ENCODE measurements at regions of chr17 and their contacts with region 1.

Region 1: DNA sequence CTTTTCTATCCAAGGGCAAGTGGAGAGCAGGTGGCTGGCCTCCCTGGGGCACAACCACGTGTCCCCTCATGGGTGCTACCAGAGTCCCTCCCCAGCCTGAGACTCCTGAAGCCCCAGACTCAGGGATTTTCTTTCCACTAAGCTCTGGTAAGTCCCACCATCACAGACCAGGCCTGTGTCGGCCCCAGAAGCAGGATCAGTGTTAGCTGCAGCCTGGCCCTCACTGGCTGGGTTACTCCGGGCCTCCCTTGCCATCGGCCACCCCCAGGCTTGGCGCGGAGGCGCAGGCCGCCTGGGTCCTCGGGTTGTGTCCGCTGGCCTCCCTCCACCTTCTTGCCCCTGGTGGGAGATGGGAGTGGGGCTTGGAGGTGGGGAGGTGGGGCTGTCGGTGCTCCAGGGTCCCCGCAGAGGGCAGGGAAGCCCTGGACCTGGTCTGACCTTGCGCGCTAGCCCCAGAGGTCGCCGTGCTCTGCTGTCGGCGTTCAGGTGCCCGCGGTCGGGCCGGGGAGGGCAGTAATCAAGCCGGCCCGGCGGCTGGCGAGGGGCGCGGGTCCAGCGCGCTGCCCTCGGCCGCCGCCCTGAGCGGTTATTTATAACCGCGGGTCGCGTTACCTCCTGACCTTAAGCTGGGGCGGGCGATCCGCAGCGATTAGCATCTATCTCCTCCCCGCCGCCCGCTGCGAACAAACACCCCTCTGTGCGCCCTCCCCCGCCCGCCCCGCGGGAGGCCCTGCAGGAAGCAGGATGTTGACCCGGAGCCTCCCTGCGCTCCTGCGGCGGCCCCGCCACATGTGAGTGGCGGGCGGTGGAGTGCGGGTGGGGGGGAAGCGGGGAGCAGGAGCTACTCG is 78.1 kb upstream of the TOB1 start:
- DNase-seq: peak; percentile 97
- ATAC-seq: peak; percentile 85
- H3K4me3 ChIP-seq: peak overlapping the region; percentile 61 to 86 (median 73)
- H3K27ac ChIP-seq: peak overlapping the region; percentile 96
- H3K4me1 ChIP-seq: peaks cover 97% of the 10 kb centered on the region
- H3K27me3 ChIP-seq: no peaks in the 10 kb centered on the region
- CTCF ChIP-seq: peak; percentile 27
- EP300 ChIP-seq: peak; percentile 71 to 96; a peak in 2 of 4 replicates
- POLR2A ChIP-seq: peak; percentile 98 to 99
- RAD21 ChIP-seq: peak; percentile 80

Region 2: GRCh38 chr17:50883850-50884438 is 60.3 kb before region 1 on chr17:
- CTCF ChIA-PET with region 1: no interaction called
- POLR2A ChIA-PET with region 1: interaction called, 43 read pairs
- in situ Hi-C with region 1: no loop called
- intact Hi-C with region 1: no loop called
- DNase-seq: no peak
- ATAC-seq: peak; percentile 47
- H3K4me3 ChIP-seq: peak overlapping the region; percentile 2 to 54 (median 41); a peak in 4 of 6 replicates
- H3K27ac ChIP-seq: peak overlapping the region; percentile 67
- H3K4me1 ChIP-seq: peaks cover 62% of the 10 kb centered on the region
- H3K27me3 ChIP-seq: no peaks in the 10 kb centered on the region
- CTCF ChIP-seq: no peak
- EP300 ChIP-seq: no peak; a peak in 1 of 4 replicates
- POLR2A ChIP-seq: no peak
- RAD21 ChIP-seq: no peak

Region 3: DNA sequence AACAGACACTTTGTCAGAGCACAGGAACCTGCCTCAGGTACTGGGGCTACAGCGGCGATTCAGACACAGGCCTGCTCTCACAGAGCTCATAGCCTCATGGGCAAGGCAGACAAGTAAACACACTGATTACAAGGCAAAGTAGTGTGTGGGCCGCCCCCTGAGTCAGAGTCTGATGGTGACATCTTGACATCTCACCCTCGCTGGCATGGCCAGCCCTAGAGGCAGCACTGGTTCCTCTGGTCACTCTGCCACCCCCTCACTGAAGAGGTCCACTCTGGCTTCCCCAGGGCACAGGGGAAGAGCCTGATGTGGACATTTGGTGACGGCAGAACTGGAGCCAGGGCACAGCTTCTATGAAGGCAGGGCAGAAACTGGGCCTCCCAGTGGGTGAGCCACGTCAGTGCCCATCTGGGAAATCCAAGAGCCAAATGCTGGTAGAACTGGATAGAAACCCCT is 45.2 kb before region 1 on chr17:
- CTCF ChIA-PET with region 1: no interaction called
- POLR2A ChIA-PET with region 1: interaction called, 125 read pairs
- in situ Hi-C with region 1: loop called (anchors 5 kb)
- intact Hi-C with region 1: loop called (anchors 2 kb)
- DNase-seq: peak; percentile 88
- ATAC-seq: peak; percentile 93
- H3K4me3 ChIP-seq: peak overlapping the region in 1 of 3 experiments; percentile 35; a peak in 3 of 6 replicates
- H3K27ac ChIP-seq: peak overlapping the region; percentile 44
- H3K4me1 ChIP-seq: peaks cover 77% of the 10 kb centered on the region
- H3K27me3 ChIP-seq: no peaks in the 10 kb centered on the region
- CTCF ChIP-seq: peak; percentile 33; the same call in 1 of the 2 replicates
- EP300 ChIP-seq: 0 out of 4 replicates have a peak, but pooled peaks of 1 of the 2 experiments have one; percentile 51
- POLR2A ChIP-seq: no peak
- RAD21 ChIP-seq: no peak

Region 4: GRCh38 chr17:50911890-50912289 is 32.4 kb before region 1 on chr17:
- CTCF ChIA-PET with region 1: no interaction called
- POLR2A ChIA-PET with region 1: interaction called, 125 read pairs
- in situ Hi-C with region 1: no loop called
- intact Hi-C with region 1: no loop called
- DNase-seq: no peak
- ATAC-seq: no peak
- H3K4me3 ChIP-seq: no peak overlapping the region
- H3K27ac ChIP-seq: peak overlapping the region; percentile 3
- H3K4me1 ChIP-seq: peaks cover 83% of the 10 kb centered on the region
- H3K27me3 ChIP-seq: no peaks in the 10 kb centered on the region
- CTCF ChIP-seq: no peak
- EP300 ChIP-seq: no peak
- POLR2A ChIP-seq: no peak
- RAD21 ChIP-seq: no peak

Region 5: DNA sequence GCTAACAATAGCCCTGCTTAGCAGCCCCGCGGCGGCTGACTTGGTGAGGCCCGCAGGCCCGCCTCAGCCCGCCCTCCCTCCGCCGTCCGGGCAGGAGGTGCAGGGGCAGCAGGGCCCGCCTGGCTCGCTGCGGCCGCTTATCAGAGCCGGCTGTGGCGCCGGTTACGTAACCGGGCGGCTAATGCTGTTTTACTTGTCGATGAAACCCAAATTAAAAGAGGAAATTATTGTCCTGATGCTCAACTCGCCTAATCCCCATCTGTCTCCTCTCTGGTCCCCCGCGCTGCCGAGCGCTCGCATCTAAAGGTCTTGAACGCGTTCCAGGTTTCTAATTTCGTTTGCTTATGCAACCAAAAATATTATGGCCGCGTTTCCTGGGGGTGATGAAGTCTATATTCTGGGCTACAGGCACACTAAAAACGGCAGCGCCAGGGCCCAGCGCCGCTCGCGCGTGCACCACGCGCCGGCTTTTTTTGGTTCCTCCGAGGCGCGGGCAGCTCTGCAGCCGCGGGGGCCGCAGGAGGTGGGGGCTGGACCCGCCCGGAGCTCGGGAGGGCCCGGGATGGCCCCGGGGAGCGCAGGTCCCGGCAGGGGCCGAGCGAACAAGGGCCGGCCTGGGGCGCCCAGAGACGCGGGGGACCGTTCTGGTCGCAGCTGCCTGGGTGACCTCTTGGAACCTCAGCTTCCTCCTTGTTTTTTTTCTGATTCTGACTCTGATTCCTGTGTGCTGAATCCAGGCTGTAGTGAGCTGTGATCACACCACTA is 13.0 kb before region 1 on chr17:
- CTCF ChIA-PET with region 1: no interaction called
- POLR2A ChIA-PET with region 1: interaction called, 56 read pairs
- in situ Hi-C with region 1: no loop called
- intact Hi-C with region 1: loop called (anchors 2 kb)
- DNase-seq: peak; percentile 77
- ATAC-seq: peak; percentile 89
- H3K4me3 ChIP-seq: peak overlapping the region; percentile 60 to 85 (median 76)
- H3K27ac ChIP-seq: peak overlapping the region; percentile 77
- H3K4me1 ChIP-seq: peaks cover 74% of the 10 kb centered on the region
- H3K27me3 ChIP-seq: peaks cover 1 to 13% of the 10 kb centered on the region in 2 experiments; a peak in 2 of 5 replicates
- CTCF ChIP-seq: no peak
- EP300 ChIP-seq: no peak
- POLR2A ChIP-seq: 0 out of 4 replicates have a peak, but pooled peaks have one; percentile 35 to 55
- RAD21 ChIP-seq: no peak